ENCODE measurements at regions of chr3 and their contacts with region 1.

Region 1: DNA sequence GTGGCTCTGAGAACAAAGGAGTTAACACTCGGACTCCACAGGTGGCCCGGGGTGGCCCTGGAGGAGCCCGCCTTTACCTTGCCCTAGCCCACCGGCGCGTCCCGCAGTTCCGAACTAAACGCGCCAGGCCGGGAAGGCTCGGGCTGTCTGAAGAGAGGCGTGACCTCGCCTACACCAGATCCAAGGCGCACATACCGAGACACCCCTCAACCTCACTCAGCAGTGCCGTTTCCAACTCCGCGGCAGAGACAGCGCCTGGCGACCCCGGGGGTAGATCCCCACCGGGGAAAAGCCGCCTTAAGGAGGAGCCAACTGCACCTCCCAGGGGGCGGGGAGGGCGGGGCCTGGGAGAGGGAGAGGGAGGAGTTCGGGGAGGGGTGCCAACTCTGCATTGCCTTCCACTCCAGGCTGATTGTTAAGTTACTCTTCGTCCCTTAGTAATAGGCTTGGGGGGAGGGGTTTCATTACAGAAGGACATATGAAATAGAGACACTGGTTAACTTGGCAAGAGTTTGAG is at the start of gene DLG1:
- DNase-seq: peak; percentile 93
- H3K4me3 Mint-ChIP-seq: peak within 1 kb of the TSS; percentile 96
- H3K27ac Mint-ChIP-seq: peak within 1 kb of the TSS; percentile 86
- H3K4me1 Mint-ChIP-seq: peaks cover 16% of the 10 kb centered on the region
- H3K27me3 Mint-ChIP-seq: peaks cover 16% of the 10 kb centered on the region
- total RNA-seq, gene DLG1: 51.9 to 55.2 TPM

Region 2: DNA sequence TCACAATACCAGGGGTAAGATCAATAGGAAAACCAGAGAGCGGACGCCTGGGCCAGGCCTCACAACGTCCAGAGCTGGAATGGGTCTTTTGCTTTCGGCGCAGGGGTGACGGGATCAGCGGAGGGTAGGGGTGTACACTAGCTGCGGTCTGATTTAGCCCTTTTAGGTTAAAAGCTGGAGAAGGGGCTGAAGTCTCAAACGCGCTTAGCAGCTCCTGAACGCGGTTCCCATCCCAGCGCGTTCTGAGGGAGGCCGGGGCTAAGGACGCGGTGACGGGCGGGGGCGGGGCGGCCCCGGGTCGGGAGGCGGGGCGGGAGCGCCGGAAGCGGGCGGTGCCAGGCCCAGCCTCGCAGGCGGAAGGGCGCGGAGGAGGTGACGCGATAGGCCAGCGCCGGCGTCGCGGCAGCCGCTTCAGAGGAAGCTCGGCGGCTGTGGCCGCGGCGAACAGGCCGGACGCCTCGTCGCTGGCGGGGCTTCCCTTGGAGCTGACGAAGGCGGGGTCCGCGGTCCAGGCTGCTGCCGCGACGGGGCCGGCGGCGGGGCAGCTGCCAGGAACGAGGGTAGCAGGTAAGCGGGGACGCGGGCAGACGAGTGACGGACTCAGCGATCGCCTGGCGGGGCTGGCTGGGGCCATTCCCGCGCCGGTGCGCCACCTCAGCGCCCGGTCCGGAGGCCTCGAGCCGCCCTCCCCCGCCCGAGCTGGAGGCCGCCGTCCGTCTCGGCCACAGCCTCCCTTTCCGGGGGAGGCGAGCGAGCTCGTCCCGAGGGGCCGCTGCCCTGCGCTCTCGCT is 430.7 kb before region 1 on chr3 and contains the start of gene SENP5:
- CTCF ChIA-PET with region 1: no interaction called
- intact Hi-C with region 1: loop called (anchors 5 kb)
- DNase-seq: peak; percentile 92
- H3K4me3 Mint-ChIP-seq: peak within 1 kb of the TSS; percentile 97
- H3K27ac Mint-ChIP-seq: peak within 1 kb of the TSS; percentile 91
- H3K4me1 Mint-ChIP-seq: peaks cover 31% of the 10 kb centered on the region
- H3K27me3 Mint-ChIP-seq: no peaks in the 10 kb centered on the region
- total RNA-seq, gene SENP5: 24.1 to 24.4 TPM

Region 3: GRCh38 chr3:197002701-197003454 is 295.5 kb before region 1 on chr3:
- CTCF ChIA-PET with region 1: no interaction called
- intact Hi-C with region 1: loop called (anchors 5 kb)
- DNase-seq: peak; percentile 92
- H3K4me3 Mint-ChIP-seq: no peak overlapping the region
- H3K27ac Mint-ChIP-seq: no peak overlapping the region
- H3K4me1 Mint-ChIP-seq: peaks cover 8% of the 10 kb centered on the region
- H3K27me3 Mint-ChIP-seq: no peaks in the 10 kb centered on the region

Region 4: GRCh38 chr3:197309528-197310361 is 11.3 kb after region 1 on chr3:
- CTCF ChIA-PET with region 1: no interaction called
- intact Hi-C with region 1: loop called (anchors 1 kb)
- DNase-seq: no peak
- H3K4me3 Mint-ChIP-seq: no peak overlapping the region
- H3K27ac Mint-ChIP-seq: peak overlapping the region; percentile 39
- H3K4me1 Mint-ChIP-seq: peaks cover 39% of the 10 kb centered on the region
- H3K27me3 Mint-ChIP-seq: no peaks in the 10 kb centered on the region

Region 5: DNA sequence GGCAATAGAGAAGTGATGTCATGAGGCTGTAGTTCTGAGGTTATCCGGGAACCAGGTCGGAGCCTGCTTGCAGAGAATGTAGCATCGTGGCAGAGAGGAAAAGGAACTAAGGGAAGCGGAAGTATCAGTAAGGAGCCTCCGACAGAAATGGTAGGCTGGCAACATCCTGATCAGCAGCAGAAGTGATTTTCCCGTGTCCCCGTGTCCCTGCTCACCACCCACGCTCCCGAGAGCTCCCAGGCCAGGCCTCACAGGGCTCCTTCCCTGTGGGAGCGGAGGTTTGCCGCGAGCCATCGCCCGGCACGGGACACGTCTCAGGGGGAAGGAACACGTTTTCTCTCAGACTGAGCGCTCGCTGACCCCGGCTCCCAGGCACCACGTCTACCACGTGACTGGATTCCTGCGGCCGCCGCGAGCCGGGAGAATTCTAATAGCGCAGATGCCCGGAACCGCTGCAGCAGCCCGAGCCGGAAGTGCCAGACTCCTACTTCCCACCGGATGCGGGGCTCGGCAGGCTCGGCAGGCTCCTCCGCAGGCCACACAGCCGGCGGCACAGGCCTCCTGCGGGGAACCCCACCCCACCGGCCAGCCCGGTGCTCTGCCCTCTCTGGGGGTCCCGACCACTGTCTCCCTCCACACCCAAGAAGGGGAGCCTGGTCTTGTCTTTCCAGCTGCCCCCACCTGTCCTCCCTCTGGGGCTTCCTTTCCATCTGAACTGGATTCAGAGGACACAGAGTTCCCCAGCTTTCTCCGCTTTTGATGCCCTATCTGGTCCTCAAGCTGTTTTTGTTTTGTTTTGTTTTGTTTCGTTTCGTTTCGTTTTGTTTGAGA is 158.1 kb after region 1 on chr3:
- CTCF ChIA-PET with region 1: no interaction called
- intact Hi-C with region 1: loop called (anchors 1 kb)
- DNase-seq: peak; percentile 75
- H3K4me3 Mint-ChIP-seq: peak overlapping the region; percentile 79
- H3K27ac Mint-ChIP-seq: peak overlapping the region; percentile 87
- H3K4me1 Mint-ChIP-seq: peaks cover 11% of the 10 kb centered on the region
- H3K27me3 Mint-ChIP-seq: no peaks in the 10 kb centered on the region

Region 6: GRCh38 chr3:197554562-197555280 is 256.3 kb after region 1 on chr3:
- CTCF ChIA-PET with region 1: no interaction called
- intact Hi-C with region 1: loop called (anchors 1 kb)
- DNase-seq: peak; percentile 97
- H3K4me3 Mint-ChIP-seq: peak overlapping the region; percentile 86
- H3K27ac Mint-ChIP-seq: peak overlapping the region; percentile 88
- H3K4me1 Mint-ChIP-seq: peaks cover 24% of the 10 kb centered on the region
- H3K27me3 Mint-ChIP-seq: peaks cover 10% of the 10 kb centered on the region

Region 7: DNA sequence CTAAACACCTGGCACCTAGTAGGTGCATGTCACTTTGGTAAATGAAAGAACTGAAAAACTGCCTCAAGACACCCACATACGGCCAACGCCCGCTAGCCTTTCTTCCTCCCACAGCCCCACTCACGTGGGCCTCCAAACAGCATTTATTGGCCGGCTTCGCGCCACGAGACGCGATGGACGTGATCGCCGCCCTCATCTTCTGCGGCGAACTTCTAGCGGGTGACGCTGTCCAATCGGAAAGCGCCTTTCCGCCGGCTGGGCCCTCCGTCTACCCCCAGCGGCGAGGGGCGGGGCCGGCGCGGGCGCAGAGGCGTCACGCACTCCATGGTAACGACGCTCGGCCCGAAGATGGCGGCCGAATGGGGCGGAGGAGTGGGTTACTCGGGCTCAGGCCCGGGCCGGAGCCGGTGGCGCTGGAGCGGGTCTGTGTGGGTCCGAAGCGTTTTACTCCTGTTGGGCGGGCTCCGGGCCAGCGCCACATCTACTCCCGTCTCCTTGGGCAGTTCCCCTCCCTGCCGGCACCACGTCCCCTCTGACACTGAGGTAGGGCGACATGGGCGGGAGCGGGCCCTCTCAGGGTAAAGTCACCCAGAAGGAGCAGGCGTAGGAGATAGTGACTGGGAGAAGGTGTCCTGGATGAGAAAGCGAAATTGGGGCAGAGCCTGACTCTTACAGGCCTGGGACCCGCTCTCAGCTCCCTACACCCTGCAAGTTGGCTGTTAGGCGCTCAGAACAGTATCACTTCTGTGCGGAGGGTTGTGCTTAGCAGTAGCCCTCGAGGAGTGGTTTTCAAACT is 661.7 kb after region 1 on chr3 and contains the start of gene LMLN:
- CTCF ChIA-PET with region 1: no interaction called
- intact Hi-C with region 1: loop called (anchors 10 kb)
- DNase-seq: peak; percentile 95
- H3K4me3 Mint-ChIP-seq: peak within 1 kb of the TSS; percentile 85
- H3K27ac Mint-ChIP-seq: peak within 1 kb of the TSS; percentile 88
- H3K4me1 Mint-ChIP-seq: peaks cover 43% of the 10 kb centered on the region
- H3K27me3 Mint-ChIP-seq: no peaks in the 10 kb centered on the region
- total RNA-seq, gene LMLN: 2.1 to 2.2 TPM